Dorsolateral prefrontal cortex (tissue), 120 donors: ENCODE measurements at regions of chr5 and their contacts with region 1.

Region 1: GRCh38 chr5:10111571-10111970 is 138.1 kb downstream of the ATPSCKMT start:
- DNase-seq: no peak
- H3K4me3 ChIP-seq: no peak overlapping the region
- H3K27ac ChIP-seq: no peak overlapping the region
- H3K27me3 ChIP-seq: no peaks in the 10 kb centered on the region
- CTCF ChIP-seq: peak in 45 of 56 donors; percentile 7 to 64 (median 38)

Region 2: DNA sequence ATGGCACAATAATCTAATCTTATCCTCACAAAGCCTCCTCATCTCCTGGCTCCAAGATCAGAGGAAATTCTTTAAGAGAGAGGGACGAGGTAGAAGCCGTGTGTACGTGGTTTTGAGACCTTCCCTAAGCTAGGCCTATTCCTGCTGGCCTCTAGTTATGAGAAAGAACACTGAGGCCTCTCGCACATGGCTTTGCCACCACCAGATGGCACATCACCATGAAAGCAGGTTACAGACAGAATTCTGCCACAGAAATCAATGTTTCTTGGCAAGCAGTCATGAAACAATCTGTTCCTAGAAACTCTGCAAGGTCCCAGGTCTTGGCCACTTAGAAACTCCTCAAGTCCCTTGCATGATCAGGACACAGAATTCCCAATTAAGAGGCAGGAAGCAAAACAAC is 213.3 kb before region 1 on chr5:
- intact Hi-C with region 1: loop called in 1 of 2 experiments (anchors 10 kb)
- DNase-seq: peak in 4 of 10 donors; percentile 24 to 56 (median 34)
- H3K4me3 ChIP-seq: no peak overlapping the region
- H3K27ac ChIP-seq: no peak overlapping the region
- H3K27me3 ChIP-seq: no peaks in the 10 kb centered on the region
- CTCF ChIP-seq: peak in 52 of 56 donors; percentile 24 to 67 (median 48)